H1 (cell line): ENCODE measurements at regions of chr17 and their contacts with region 1.

Region 1: GRCh38 chr17:41322094-41322902 is 6.8 kb upstream of the KRTAP17-1 start:
- DNase-seq: no peak
- H3K4me3 ChIP-seq: no peak overlapping the region
- H3K27ac ChIP-seq: no peak overlapping the region
- H3K4me1 ChIP-seq: no peaks in the 10 kb centered on the region; a peak in 1 of 7 replicates
- H3K27me3 ChIP-seq: no peaks in the 10 kb centered on the region
- CTCF ChIP-seq: peak in 2 of 3 experiments; percentile 41 to 68; a peak in 2 of 4 replicates
- EP300 ChIP-seq: no peak
- POLR2A ChIP-seq: no peak
- RAD21 ChIP-seq: peak; percentile 69 to 72

Region 2: DNA sequence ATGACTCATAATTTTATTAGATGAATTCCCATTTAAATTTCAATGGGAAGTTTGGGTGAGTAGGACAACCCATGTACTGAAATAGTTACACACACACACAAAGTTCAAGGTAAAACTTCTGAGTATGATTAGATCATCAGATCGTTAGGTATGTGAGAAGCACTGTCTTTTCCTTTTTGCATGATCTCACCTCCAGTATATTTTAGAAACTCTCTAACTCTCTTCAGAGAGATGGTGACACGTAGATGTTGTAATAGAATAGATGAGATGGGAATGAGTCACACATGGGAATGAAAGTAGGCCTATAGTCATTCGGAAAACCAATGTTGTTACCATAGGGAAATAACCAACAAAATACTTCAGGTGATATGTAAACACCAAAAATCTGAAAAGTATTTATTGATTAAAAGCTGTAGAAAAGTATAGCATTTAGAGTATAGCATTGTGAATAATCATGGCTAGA is 407.1 kb before region 1 on chr17:
- CTCF ChIA-PET with region 1: interaction called, 28 read pairs
- POLR2A ChIA-PET with region 1: no interaction called
- DNase-seq: no peak
- H3K4me3 ChIP-seq: no peak overlapping the region
- H3K27ac ChIP-seq: no peak overlapping the region
- H3K4me1 ChIP-seq: no peaks in the 10 kb centered on the region
- H3K27me3 ChIP-seq: no peaks in the 10 kb centered on the region
- CTCF ChIP-seq: no peak
- EP300 ChIP-seq: no peak
- POLR2A ChIP-seq: no peak
- RAD21 ChIP-seq: no peak

Region 3: DNA sequence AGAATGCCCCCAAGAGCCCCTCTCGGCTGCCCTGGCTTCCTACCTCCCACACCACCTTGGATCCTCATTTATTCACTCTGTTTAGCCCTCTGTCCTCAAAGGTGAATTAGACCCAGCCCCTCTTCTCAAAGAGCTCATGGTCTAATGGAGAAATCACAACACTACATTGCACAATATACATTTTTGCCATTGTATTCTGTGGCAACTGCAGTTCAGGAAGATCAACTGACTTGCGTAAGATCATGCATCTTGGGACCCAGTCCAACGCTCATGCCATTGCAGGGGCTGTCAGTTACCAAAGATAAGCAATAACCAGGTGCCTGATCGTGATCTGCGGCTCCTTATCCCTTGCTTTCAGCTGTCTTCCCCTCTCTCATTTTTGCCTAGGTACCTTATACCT is 117.1 kb after region 1 on chr17:
- CTCF ChIA-PET with region 1: no interaction called
- POLR2A ChIA-PET with region 1: no interaction called
- DNase-seq: no peak
- H3K4me3 ChIP-seq: no peak overlapping the region
- H3K27ac ChIP-seq: no peak overlapping the region
- H3K4me1 ChIP-seq: no peaks in the 10 kb centered on the region
- H3K27me3 ChIP-seq: no peaks in the 10 kb centered on the region; a peak in 1 of 7 replicates
- CTCF ChIP-seq: no peak
- EP300 ChIP-seq: no peak
- POLR2A ChIP-seq: no peak
- RAD21 ChIP-seq: no peak